Activated B cell treated with CpG ODN at 0.5 μM for 24 hours (primary cell): ENCODE measurements at regions of chr9 and their contacts with region 1.

Region 1: DNA sequence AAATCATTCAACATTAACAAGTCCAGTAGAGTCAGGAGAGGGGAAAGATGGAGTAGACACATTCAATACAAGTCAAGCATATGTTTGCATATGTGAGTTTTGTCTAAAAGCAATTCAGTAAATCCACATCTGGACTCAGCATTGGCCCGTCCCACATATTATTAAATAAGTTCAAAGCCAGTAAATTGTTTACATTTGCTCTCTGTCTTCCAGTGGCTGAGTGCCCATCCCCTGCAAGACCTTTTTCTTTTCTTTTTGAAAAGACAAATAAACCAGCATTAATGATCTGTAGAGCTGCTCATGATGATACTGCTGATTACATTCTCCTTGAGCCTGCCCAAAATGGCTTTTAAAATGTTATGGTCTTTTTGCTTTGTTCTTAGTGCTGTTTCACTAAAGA is 71.1 kb downstream of the TNC start:
- DNase-seq: no peak
- ATAC-seq: no peak
- H3K4me3 Mint-ChIP-seq: no peak overlapping the region
- H3K27ac Mint-ChIP-seq: no peak overlapping the region
- H3K4me1 Mint-ChIP-seq: peaks cover 3% of the 10 kb centered on the region
- H3K27me3 Mint-ChIP-seq: peaks cover 30% of the 10 kb centered on the region
- CTCF ChIP-seq: no peak

Region 2: GRCh38 chr9:115035841-115036612 is 10.8 kb before region 1 on chr9:
- CTCF ChIA-PET with region 1: no interaction called
- POLR2A ChIA-PET with region 1: interaction called, 15 read pairs
- intact Hi-C with region 1: no loop called
- DNase-seq: no peak
- ATAC-seq: peak; percentile 56
- H3K4me3 Mint-ChIP-seq: peak overlapping the region; percentile 2
- H3K27ac Mint-ChIP-seq: peak overlapping the region; percentile 8
- H3K4me1 Mint-ChIP-seq: peaks cover 8% of the 10 kb centered on the region
- H3K27me3 Mint-ChIP-seq: peaks cover 5% of the 10 kb centered on the region
- CTCF ChIP-seq: no peak